ENCODE measurements at regions of chr5 and their contacts with region 1.

Region 1: DNA sequence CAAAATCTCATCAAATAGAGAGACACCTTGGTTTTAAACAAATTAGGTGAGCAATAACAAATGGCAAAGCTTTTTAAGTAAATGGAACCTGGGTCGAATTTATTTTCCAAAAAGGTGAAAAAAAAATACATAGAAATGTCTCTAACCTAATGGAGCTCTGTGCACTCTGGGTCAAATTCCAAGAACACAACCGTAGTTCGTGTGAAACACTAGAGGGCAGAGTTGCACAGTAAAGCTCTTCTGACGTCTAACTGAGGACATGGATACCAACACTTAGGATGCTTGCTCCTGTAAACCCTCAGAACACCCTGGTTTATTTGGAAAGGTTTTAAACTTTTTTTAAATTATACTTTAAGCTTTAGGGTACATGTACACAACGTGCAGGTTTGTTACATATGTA is 18.9 kb downstream of the MARCHF11 start:
- DNase-seq: no peak
- H3K4me3 Mint-ChIP-seq: no peak overlapping the region
- H3K27ac Mint-ChIP-seq: no peak overlapping the region
- H3K4me1 Mint-ChIP-seq: no peaks in the 10 kb centered on the region
- H3K27me3 Mint-ChIP-seq: no peaks in the 10 kb centered on the region

Region 2: DNA sequence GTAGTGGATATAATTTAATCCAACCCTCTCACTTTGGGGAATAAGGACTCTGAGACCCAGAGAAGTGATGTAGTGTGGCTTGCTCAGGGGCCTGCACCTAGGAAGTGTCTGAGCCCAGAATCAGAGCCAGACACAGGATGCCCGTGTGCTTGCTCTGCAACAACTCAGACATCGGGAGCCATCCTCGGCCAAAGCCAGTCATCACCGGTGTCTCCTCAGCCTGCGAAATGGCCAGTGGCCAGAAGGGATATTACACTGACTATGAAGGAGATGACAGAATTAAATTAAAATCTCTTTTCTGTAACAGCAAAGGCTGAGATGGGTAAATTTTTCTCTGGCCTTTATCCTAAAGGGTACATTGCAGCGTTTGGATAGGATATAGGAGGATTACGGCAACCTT is 84.0 kb before region 1 on chr5:
- CTCF ChIA-PET with region 1: no interaction called
- DNase-seq: no peak
- H3K4me3 Mint-ChIP-seq: no peak overlapping the region
- H3K27ac Mint-ChIP-seq: no peak overlapping the region
- H3K4me1 Mint-ChIP-seq: no peaks in the 10 kb centered on the region
- H3K27me3 Mint-ChIP-seq: no peaks in the 10 kb centered on the region

Region 3: DNA sequence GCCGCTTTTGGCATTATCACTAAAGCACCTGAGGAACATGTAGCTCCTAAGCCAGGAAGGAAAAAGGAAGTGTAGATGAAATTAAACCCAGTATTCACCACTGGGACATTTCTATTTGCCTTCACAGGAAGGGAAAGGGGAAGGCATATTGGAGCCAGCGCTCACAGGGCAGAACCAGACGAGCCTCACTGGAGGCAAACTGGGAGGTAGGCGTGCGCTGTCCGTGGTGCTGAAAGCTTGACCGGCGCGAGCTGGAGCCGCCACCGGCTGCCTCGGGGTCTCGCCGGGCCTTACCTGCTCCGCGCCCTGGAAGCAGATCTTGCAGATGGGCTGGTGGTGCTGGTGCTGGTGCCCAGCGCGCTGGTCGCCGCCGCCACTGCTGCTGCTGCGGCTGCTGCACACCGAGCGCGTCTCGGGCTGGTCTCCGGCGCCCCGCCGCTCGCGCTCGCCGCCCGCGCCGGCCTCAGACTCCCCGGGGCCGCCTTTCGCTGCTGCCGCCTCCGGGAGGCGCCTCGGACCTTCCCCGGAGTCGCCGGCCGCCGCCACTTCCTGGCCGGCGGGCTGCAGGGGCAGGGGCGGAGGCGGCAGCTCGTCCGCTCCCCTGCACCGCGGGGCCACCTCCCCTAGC is 18.2 kb after region 1 on chr5:
- CTCF ChIA-PET with region 1: no interaction called
- DNase-seq: peak; percentile 65
- H3K4me3 Mint-ChIP-seq: no peak overlapping the region
- H3K27ac Mint-ChIP-seq: peak overlapping the region; percentile 53
- H3K4me1 Mint-ChIP-seq: peaks cover 4% of the 10 kb centered on the region
- H3K27me3 Mint-ChIP-seq: peaks cover 30% of the 10 kb centered on the region

Region 4: GRCh38 chr5:16456103-16456832 is 295.6 kb after region 1 on chr5:
- CTCF ChIA-PET with region 1: interaction called, 19 read pairs
- DNase-seq: peak; percentile 26
- H3K4me3 Mint-ChIP-seq: no peak overlapping the region
- H3K27ac Mint-ChIP-seq: peak overlapping the region; percentile 67
- H3K4me1 Mint-ChIP-seq: peaks cover 37% of the 10 kb centered on the region
- H3K27me3 Mint-ChIP-seq: no peaks in the 10 kb centered on the region

Region 5: DNA sequence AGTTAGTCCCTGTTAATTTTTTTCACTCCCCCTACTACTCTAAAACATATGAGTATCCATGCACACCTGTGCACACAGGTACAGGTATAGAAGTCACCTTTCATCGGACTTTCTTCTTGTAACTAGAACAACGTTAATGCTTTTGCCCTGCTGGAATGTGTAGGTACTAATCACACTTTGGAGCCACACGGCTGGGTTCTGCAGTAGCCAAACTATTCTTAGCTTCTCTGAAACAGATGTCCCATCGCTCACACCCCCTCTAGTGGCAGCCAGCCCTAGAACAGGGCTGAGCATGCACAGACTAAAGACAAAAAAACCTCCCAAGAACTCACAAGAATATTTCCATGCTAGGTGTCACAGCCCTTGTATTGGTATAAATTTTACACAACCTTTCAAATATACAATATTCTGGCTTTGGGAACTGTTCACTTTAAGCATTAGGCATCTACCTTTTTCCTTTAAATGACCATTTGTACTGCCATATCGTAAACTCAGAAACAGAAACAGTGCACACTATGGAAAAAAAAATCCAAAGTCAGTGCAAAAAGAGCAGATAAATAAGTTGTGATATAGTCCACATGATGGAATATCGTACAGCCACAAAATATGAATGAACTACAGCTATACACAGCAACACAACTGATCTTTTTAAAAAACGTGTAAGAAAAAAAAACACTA is 392.1 kb after region 1 on chr5:
- CTCF ChIA-PET with region 1: interaction called, 12 read pairs
- DNase-seq: peak; percentile 70
- H3K4me3 Mint-ChIP-seq: no peak overlapping the region
- H3K27ac Mint-ChIP-seq: peak overlapping the region; percentile 6
- H3K4me1 Mint-ChIP-seq: peaks cover 15% of the 10 kb centered on the region
- H3K27me3 Mint-ChIP-seq: no peaks in the 10 kb centered on the region

Measured in activated naive CD4-positive, alpha-beta T cell treated with anti-CD3 and anti-CD28 coated beads, Interleukin-2, amount 10 ng/mL, durations not matched to agents 7 days and 5 days (primary cell).